Posterior cingulate gyrus (tissue), 11 donors: ENCODE measurements at regions of chr10 and their contacts with region 1.

Region 1: GRCh38 chr10:80382989-80383388 is 25.4 kb upstream of the PRXL2A start:
- DNase-seq: peak in 6 of 10 donors; percentile 12 to 71 (median 30)

Region 2: DNA sequence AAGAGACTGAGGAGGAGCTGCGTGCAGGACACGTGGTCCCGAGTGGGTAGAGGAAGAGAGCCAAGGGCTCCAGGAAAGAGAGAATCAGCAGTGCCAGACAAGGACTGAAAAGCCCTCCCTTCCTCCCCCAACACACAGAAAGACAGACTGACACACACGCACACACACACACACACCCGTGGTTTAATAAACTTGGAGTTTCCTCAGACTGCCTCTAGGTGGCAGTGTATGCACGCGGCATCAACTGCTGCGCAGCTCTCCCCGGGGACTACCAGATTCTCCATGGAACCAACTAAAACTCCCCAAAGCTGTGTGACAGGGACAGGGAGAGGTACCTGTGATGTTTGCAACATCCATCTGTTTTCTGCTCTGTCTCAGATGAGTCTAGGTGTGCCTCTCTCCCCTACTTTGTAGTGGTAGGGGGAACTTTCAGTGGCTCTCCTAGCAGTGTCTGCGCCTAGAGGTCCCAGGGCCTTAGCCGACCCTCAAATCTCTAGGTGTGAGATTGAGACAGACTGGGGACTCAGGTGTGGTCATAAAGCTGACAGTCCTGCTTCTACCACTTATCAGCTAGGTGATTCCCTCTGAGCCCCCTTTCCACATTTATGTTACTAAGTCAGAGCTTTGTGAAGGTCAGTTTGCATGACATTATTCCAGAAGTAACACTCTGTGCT is 61.8 kb after region 1 on chr10:
- intact Hi-C with region 1: loop called (anchors 5 kb)
- DNase-seq: peak; percentile 47 to 96 (median 70)